Calu3 (cell line): ENCODE measurements at regions of chr3 and their contacts with region 1.

Region 1: GRCh38 chr3:38164966-38165680 is at the start of gene OXSR1:
- DNase-seq: peak; percentile 98
- H3K4me3 Mint-ChIP-seq: peak within 1 kb of the TSS; percentile 97
- H3K27ac Mint-ChIP-seq: peak within 1 kb of the TSS; percentile 95
- H3K4me1 Mint-ChIP-seq: peaks cover 43% of the 10 kb centered on the region
- H3K27me3 Mint-ChIP-seq: no peaks in the 10 kb centered on the region
- CTCF ChIP-seq: no peak
- total RNA-seq, gene OXSR1: 49.5 and 50.4 TPM in 2 replicates

Region 2: GRCh38 chr3:38131621-38132369 is 33.3 kb before region 1 on chr3:
- CTCF ChIA-PET with region 1: interaction called, 24 read pairs
- intact Hi-C with region 1: loop called (anchors 1 kb)
- DNase-seq: no peak
- H3K4me3 Mint-ChIP-seq: no peak overlapping the region
- H3K27ac Mint-ChIP-seq: no peak overlapping the region
- H3K4me1 Mint-ChIP-seq: peaks cover 44% of the 10 kb centered on the region
- H3K27me3 Mint-ChIP-seq: no peaks in the 10 kb centered on the region
- CTCF ChIP-seq: no peak

Region 3: GRCh38 chr3:38136777-38137614 is 28.1 kb before region 1 on chr3 and contains the start of gene ACAA1:
- CTCF ChIA-PET with region 1: interaction called, 24 read pairs
- intact Hi-C with region 1: loop called (anchors 1 kb)
- DNase-seq: peak; percentile 98
- H3K4me3 Mint-ChIP-seq: peak within 1 kb of the TSS; percentile 85
- H3K27ac Mint-ChIP-seq: peak within 1 kb of the TSS; percentile 92
- H3K4me1 Mint-ChIP-seq: peaks cover 72% of the 10 kb centered on the region
- H3K27me3 Mint-ChIP-seq: no peaks in the 10 kb centered on the region
- CTCF ChIP-seq: no peak
- total RNA-seq, gene ACAA1: 64.5 and 71.1 TPM in 2 replicates

Region 4: DNA sequence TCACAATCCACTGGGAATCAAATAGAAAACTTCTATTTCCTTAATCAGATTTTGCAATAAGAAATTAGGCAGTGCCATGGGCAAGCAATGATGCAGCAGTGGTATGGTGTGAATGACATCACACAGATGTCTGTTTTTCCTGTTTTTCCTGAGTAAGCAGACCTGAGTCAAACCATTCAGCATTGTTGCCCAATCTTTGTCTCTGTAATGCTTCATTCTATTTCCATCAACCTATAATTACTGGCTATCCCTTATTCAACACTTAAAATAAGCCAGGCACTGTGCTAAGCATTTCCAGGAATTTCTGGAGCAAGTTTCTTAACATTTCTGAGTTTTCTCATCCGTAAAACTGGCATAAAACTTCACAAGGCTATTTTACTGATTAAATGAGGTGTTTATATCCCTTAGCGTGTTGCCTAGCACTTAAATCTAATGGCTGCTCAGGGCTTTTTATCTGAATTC is 11.1 kb before region 1 on chr3:
- CTCF ChIA-PET with region 1: interaction called, 17 read pairs
- intact Hi-C with region 1: no loop called
- DNase-seq: peak; percentile 54
- H3K4me3 Mint-ChIP-seq: no peak overlapping the region
- H3K27ac Mint-ChIP-seq: peak overlapping the region; percentile 83
- H3K4me1 Mint-ChIP-seq: peaks cover 30% of the 10 kb centered on the region
- H3K27me3 Mint-ChIP-seq: no peaks in the 10 kb centered on the region
- CTCF ChIP-seq: no peak

Region 5: GRCh38 chr3:38247366-38248035 is 82.4 kb after region 1 on chr3:
- CTCF ChIA-PET with region 1: interaction called, 3 read pairs
- intact Hi-C with region 1: loop called (anchors 5 kb)
- DNase-seq: peak; percentile 15
- H3K4me3 Mint-ChIP-seq: no peak overlapping the region
- H3K27ac Mint-ChIP-seq: peak overlapping the region; percentile 76
- H3K4me1 Mint-ChIP-seq: peaks cover 20% of the 10 kb centered on the region
- H3K27me3 Mint-ChIP-seq: no peaks in the 10 kb centered on the region
- CTCF ChIP-seq: no peak